ENCODE measurements at regions of chr14 and their contacts with region 1.

Region 1: DNA sequence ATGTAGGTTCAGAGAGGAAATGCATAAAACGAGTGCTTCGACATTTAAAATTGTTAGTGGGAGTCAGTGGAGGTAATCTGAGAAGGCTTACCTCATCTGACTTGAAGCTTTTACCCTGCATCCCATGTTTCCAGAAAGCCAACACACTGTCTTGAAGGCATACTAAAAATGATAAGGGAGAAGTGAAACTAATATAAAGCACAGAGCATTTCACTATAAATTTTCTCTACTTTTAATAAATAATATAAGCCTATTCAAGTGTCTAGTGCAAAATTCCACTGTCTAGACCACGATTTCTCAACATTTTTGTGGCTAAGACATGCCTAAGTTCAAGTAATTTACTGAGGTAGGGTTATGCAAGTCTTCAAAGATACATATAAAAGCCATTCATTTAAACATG is 29.1 kb upstream of the CDKL1 start:
- DNase-seq: no peak
- ATAC-seq: no peak
- H3K4me3 ChIP-seq: no peak overlapping the region
- H3K27ac ChIP-seq: no peak overlapping the region
- H3K4me1 ChIP-seq: no peaks in the 10 kb centered on the region
- H3K27me3 ChIP-seq: no peaks in the 10 kb centered on the region
- CTCF ChIP-seq: no peak

Region 2: GRCh38 chr14:50148799-50149198 is 277.0 kb before region 1 on chr14:
- CTCF ChIA-PET with region 1: no interaction called
- POLR2A ChIA-PET with region 1: interaction called, 11 read pairs
- intact Hi-C with region 1: no loop called
- DNase-seq: no peak
- ATAC-seq: no peak
- H3K4me3 ChIP-seq: no peak overlapping the region
- H3K27ac ChIP-seq: no peak overlapping the region
- H3K4me1 ChIP-seq: no peaks in the 10 kb centered on the region
- H3K27me3 ChIP-seq: no peaks in the 10 kb centered on the region
- CTCF ChIP-seq: no peak